ENCODE measurements at regions of chr4 and their contacts with region 1.

Region 1: DNA sequence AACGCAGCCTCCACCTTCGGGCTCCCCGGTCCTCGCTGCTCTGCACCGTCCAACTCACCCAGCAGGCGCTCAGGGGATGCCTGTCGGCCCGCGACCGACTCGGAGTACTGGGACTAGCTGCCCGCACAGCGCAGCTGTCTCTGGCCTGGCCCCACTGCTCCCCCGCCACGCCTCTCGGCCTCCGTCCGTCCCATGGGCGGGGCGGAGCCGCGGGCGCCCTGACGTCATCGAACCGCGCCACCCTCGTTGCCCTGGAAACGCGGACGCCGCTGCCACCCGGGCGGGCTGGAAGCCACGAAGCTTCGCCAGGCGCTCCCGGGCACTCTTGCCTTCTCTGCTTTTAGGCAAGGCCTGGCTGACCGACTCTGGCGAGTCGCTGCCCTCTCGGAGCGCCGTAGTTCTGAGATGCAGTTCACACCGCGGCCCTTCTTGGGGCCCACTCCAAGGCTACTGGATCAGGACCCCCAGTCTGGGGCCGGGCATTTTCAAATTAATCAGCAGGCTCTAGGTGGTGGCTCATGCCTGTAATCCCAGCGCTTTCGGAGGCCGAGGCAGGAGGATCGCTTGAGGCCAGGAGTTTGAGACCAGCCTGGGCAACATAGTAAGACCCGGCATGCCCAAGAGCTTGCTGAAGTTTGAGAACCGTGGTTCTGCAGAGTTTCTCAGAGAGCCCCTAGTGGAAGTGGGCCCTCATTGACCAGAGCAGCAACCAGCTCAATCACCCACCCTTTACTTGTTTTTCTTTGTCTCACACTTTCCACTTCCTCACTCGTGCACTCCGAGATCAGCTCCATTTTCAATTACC is 12.0 kb downstream of the ACOX3 start:
- DNase-seq: peak; percentile 78 to 94
- H3K4me3 ChIP-seq: peak overlapping the region; percentile 72 to 83
- H3K27ac ChIP-seq: peak overlapping the region; percentile 86
- H3K4me1 ChIP-seq: peaks cover 0 to 35% (median 28%) of the 10 kb centered on the region in 4 donors
- H3K27me3 ChIP-seq: no peaks in the 10 kb centered on the region
- CTCF ChIP-seq: no peak

Region 2: GRCh38 chr4:8158710-8159536 is 269.6 kb before region 1 on chr4 and contains the start of gene ABLIM2:
- intact Hi-C with region 1: loop called (anchors 5 kb)
- DNase-seq: peak; percentile 98 to 99
- H3K4me3 ChIP-seq: peak within 1 kb of the TSS; percentile 62 to 80
- H3K27ac ChIP-seq: peak within 1 kb of the TSS; percentile 49 to 59
- H3K4me1 ChIP-seq: peaks cover 0 to 36% (median 30%) of the 10 kb centered on the region in 4 donors
- H3K27me3 ChIP-seq: no peaks in the 10 kb centered on the region
- CTCF ChIP-seq: no peak

Region 3: GRCh38 chr4:8607603-8608481 is 179.3 kb after region 1 on chr4:
- intact Hi-C with region 1: no loop called
- DNase-seq: no peak
- H3K4me3 ChIP-seq: no peak overlapping the region
- H3K27ac ChIP-seq: no peak overlapping the region
- H3K4me1 ChIP-seq: peaks cover 0 to 8% (median 2%) of the 10 kb centered on the region in 4 donors
- H3K27me3 ChIP-seq: peaks cover 0 to 30% of the 10 kb centered on the region in 2 donors
- CTCF ChIP-seq: peak; percentile 65 to 96